Ascending aorta (tissue), 2 donors: ENCODE measurements at regions of chrX and their contacts with region 1.

Region 1: DNA sequence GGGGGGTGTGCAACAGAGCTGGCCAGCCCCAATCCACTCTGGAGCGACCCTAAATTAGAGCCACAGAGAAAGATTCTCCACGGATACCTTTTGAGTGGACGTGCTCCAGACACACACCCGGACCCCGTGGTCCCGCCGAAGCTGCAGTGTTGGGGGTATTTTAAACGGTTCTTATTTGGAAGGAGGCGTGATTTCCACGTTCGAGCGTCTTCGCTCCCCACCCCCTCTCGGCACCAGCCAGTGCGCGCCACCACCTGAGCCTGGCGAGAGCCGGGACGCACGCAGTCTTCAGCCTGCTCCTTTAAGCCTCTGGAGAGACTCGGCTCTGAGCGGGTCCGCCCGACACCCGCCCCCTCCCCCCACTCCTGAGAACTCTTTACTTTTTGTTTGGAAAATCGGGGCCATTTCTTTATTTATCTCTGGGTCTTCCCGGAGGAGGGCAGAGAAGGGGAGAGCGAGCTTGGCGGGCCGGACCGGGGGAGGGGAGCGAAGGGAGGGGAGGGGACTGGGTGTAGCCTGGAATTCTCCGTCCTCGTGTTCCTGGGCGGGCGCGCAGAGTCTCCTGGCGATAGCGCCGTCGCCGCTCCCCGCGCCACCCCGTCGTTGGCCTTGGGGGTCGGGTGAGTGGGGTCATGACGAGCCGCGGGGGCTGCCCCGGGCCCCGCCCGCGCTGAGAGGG is 668 bp upstream of the PTCHD1 start:
- DNase-seq: no peak
- H3K4me3 ChIP-seq: peak overlapping the region; percentile 45 to 52
- H3K27ac ChIP-seq: no peak overlapping the region
- H3K4me1 ChIP-seq: peaks cover 0 to 2% of the 10 kb centered on the region in 2 donors
- H3K27me3 ChIP-seq: peaks cover 8% of the 10 kb centered on the region
- CTCF ChIP-seq: no peak

Region 2: GRCh38 chrX:23548164-23548563 is 214.2 kb after region 1 on chrX:
- intact Hi-C with region 1: loop called (anchors 10 kb)
- DNase-seq: no peak
- H3K4me3 ChIP-seq: no peak overlapping the region
- H3K27ac ChIP-seq: no peak overlapping the region
- H3K4me1 ChIP-seq: no peaks in the 10 kb centered on the region
- H3K27me3 ChIP-seq: no peaks in the 10 kb centered on the region
- CTCF ChIP-seq: no peak

Region 3: DNA sequence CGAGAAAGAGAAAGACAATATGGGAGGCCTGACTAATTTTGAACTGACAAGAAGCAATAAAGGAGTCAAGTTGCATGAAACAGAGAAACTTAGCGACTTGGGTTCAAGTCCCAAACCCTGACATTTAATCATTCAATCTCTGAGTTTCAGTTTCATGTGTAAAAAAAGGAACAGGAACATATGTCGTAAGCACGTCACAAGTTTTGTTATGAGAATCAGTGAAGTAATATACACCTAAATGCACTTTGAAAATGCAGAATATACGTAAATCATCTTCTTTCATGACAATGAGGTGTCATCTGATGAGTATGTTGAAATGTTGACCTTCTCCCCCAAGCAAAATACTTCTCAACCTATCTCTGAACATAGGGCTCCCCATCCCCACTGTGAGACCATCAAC is 398.7 kb after region 1 on chrX:
- intact Hi-C with region 1: no loop called
- DNase-seq: no peak
- H3K4me3 ChIP-seq: no peak overlapping the region
- H3K27ac ChIP-seq: no peak overlapping the region
- H3K4me1 ChIP-seq: no peaks in the 10 kb centered on the region
- H3K27me3 ChIP-seq: no peaks in the 10 kb centered on the region
- CTCF ChIP-seq: no peak